Naive thymus-derived CD4-positive, alpha-beta T cell (primary cell): ENCODE measurements at regions of chr2 and their contacts with region 1.

Region 1: GRCh38 chr2:208254871-208255556 is at the start of gene IDH1:
- DNase-seq: peak; percentile 79 to 97 (median 88)
- ATAC-seq: peak; percentile 95
- H3K4me3 ChIP-seq: peak within 1 kb of the TSS; percentile 70
- H3K4me3 Mint-ChIP-seq: peak within 1 kb of the TSS; percentile 93 to 100 (median 97)
- H3K27ac ChIP-seq: peak within 1 kb of the TSS; percentile 62
- H3K27ac Mint-ChIP-seq: peak within 1 kb of the TSS; percentile 47 to 91 (median 79)
- H3K4me1 ChIP-seq: peaks cover 0 to 9% of the 10 kb centered on the region in 2 donors
- H3K4me1 Mint-ChIP-seq: peaks cover 8 to 28% (median 23%) of the 10 kb centered on the region in 7 donors
- H3K27me3 ChIP-seq: no peaks in the 10 kb centered on the region
- H3K27me3 Mint-ChIP-seq: peaks cover 0 to 3% (median 0%) of the 10 kb centered on the region in 5 donors
- total RNA-seq, gene IDH1: 5.0 to 26.4 (median 20.4) TPM

Region 2: DNA sequence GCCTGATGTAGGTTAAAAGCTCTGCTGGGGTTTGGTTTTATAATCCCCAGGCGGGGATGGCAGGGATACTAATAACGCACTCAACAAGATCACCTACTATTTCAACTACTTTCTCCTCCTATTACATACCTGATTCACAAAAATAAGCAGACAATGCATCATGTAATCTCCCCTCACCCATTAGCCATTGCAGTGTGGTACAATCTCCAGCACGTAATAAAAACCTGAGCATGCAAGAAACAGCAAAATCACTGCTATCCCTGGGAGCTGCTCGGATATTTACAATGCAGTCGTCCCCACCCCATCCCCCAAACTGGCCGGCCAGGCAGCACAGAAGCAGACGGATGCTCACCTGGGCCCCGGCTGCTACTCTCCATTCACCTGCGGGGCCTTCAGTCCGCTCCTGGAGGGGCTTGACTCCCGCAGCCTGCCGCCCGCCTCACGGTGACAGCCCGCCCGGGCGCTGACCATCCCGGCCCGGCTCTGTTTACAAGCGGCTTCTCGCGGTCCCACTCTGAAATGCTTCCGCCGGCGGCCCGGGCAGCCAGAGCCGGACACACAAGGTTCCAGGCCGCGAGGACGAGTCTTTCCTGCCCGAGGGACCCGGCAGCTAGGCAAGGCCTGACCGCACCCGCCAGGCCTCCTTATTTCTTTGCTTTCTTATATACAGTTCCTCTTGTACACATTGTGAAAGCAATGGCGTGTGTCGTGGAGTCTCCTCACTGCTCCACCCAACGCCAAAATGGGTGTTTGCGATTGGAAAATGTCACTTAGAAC is 229.8 kb before region 1 on chr2 and contains the start of gene PLEKHM3:
- CTCF ChIA-PET with region 1: no interaction called
- POLR2A ChIA-PET with region 1: no interaction called
- intact Hi-C with region 1: loop called in 1 of 2 experiments (anchors 2 kb)
- DNase-seq: peak; percentile 12 to 80 (median 62)
- ATAC-seq: peak; percentile 93
- H3K4me3 ChIP-seq: peak within 1 kb of the TSS; percentile 88
- H3K4me3 Mint-ChIP-seq: peak within 1 kb of the TSS; percentile 85 to 100 (median 96)
- H3K27ac ChIP-seq: peak within 1 kb of the TSS; percentile 76
- H3K27ac Mint-ChIP-seq: peak within 1 kb of the TSS; percentile 89 to 98 (median 94)
- H3K4me1 ChIP-seq: peaks cover 0 to 4% of the 10 kb centered on the region in 2 donors
- H3K4me1 Mint-ChIP-seq: peaks cover 12 to 34% (median 27%) of the 10 kb centered on the region in 7 donors
- H3K27me3 ChIP-seq: no peaks in the 10 kb centered on the region
- H3K27me3 Mint-ChIP-seq: no peaks in the 10 kb centered on the region
- total RNA-seq, gene PLEKHM3: 6.1 to 19.4 (median 15.5) TPM

Region 3: DNA sequence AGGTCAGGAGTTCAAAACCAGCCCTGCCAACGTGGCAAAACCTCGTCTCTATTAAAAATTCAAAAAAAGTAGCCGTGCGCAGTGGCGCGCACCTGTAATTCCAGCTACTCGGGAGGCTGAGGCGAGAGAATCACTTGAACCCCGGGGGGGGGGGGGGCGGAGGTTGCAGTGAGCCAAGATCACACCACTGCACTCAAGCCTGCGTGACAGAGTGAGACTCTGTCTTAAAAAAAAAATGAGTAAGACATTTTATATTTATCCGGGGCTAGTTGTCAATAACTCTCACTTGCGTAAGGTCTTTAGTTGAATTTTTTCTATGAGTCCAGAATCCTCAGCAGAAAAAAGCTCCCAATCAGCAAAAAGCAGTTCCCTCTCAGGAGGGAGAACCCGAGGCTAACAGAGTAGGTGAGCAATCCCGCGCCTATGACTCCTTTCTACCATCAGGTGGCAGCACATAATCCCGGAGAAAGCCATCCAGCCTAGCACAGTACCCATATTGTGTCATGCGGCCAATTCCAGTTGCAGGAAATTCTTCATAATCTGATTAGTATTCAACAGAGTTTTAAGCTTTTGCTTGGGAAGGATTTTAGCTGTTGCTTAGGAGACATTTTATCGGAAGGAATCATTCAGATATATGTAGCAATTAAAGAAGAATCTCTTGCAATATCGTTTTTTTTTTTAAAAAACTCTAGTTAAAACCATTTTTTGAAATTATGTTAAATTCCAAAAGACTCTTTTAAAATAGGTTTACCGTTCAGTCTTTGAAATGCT is 79.8 kb before region 1 on chr2:
- CTCF ChIA-PET with region 1: interaction called, 6 read pairs
- POLR2A ChIA-PET with region 1: no interaction called
- intact Hi-C with region 1: loop called (anchors 1 kb)
- DNase-seq: peak; percentile 7 to 59 (median 45)
- ATAC-seq: peak; percentile 93
- H3K4me3 ChIP-seq: no peak overlapping the region
- H3K4me3 Mint-ChIP-seq: no peak overlapping the region
- H3K27ac ChIP-seq: no peak overlapping the region
- H3K27ac Mint-ChIP-seq: no peak overlapping the region
- H3K4me1 ChIP-seq: no peaks in the 10 kb centered on the region
- H3K4me1 Mint-ChIP-seq: peaks cover 0 to 6% (median 4%) of the 10 kb centered on the region in 7 donors
- H3K27me3 ChIP-seq: no peaks in the 10 kb centered on the region
- H3K27me3 Mint-ChIP-seq: peaks cover 2 to 20% (median 11%) of the 10 kb centered on the region in 5 donors

Region 4: DNA sequence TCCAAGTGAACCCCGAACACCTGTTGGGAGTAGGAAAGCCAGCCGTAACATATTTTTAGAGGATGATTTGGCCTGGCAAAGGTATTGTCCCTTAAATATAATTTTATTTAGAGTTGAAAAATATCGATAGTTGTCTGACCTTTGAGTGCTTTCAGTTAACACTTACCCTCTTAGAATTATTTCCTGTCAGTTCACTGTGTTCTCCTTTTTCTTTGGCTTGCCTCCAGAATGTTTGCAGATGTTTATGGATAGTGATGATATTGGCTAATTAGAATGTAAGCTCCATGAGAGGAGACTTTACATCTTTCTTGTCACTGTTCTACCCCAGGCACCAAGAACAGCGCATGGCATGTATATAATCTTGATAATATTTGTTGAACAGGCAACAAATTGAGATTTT is 30.8 kb after region 1 on chr2:
- CTCF ChIA-PET with region 1: no interaction called
- POLR2A ChIA-PET with region 1: no interaction called
- intact Hi-C with region 1: no loop called
- DNase-seq: no peak
- ATAC-seq: no peak
- H3K4me3 ChIP-seq: no peak overlapping the region
- H3K4me3 Mint-ChIP-seq: no peak overlapping the region
- H3K27ac ChIP-seq: no peak overlapping the region
- H3K27ac Mint-ChIP-seq: no peak overlapping the region
- H3K4me1 ChIP-seq: no peaks in the 10 kb centered on the region
- H3K4me1 Mint-ChIP-seq: peaks cover 6 to 15% (median 11%) of the 10 kb centered on the region in 7 donors
- H3K27me3 ChIP-seq: no peaks in the 10 kb centered on the region
- H3K27me3 Mint-ChIP-seq: no peaks in the 10 kb centered on the region

Region 5: GRCh38 chr2:208373460-208374089 is 118.6 kb after region 1 on chr2:
- CTCF ChIA-PET with region 1: no interaction called
- POLR2A ChIA-PET with region 1: no interaction called
- intact Hi-C with region 1: no loop called
- DNase-seq: peak in 3 of 9 donors; percentile 15 to 22 (median 19)
- ATAC-seq: peak; percentile 66
- H3K4me3 ChIP-seq: no peak overlapping the region
- H3K4me3 Mint-ChIP-seq: no peak overlapping the region
- H3K27ac ChIP-seq: no peak overlapping the region
- H3K27ac Mint-ChIP-seq: no peak overlapping the region
- H3K4me1 ChIP-seq: no peaks in the 10 kb centered on the region
- H3K4me1 Mint-ChIP-seq: no peaks in the 10 kb centered on the region
- H3K27me3 ChIP-seq: peaks cover 0 to 2% of the 10 kb centered on the region in 2 donors
- H3K27me3 Mint-ChIP-seq: peaks cover under 1 to 15% (median 4%) of the 10 kb centered on the region in 5 donors

Region 6: GRCh38 chr2:210171309-210172203 is 1916.5 kb after region 1 on chr2 and contains the start of gene KANSL1L:
- CTCF ChIA-PET with region 1: no interaction called
- POLR2A ChIA-PET with region 1: no interaction called
- intact Hi-C with region 1: loop called (anchors 2 to 5 kb)
- DNase-seq: peak; percentile 92 to 99 (median 94)
- ATAC-seq: peak; percentile 95
- H3K4me3 ChIP-seq: peak within 1 kb of the TSS; percentile 89
- H3K4me3 Mint-ChIP-seq: peak within 1 kb of the TSS; percentile 90 to 100 (median 98)
- H3K27ac ChIP-seq: peak within 1 kb of the TSS; percentile 93
- H3K27ac Mint-ChIP-seq: peak within 1 kb of the TSS; percentile 93 to 99 (median 96)
- H3K4me1 ChIP-seq: peaks cover 6 to 7% of the 10 kb centered on the region in 2 donors
- H3K4me1 Mint-ChIP-seq: peaks cover 17 to 42% (median 33%) of the 10 kb centered on the region in 7 donors
- H3K27me3 ChIP-seq: no peaks in the 10 kb centered on the region
- H3K27me3 Mint-ChIP-seq: peaks cover 0 to 41% (median 0%) of the 10 kb centered on the region in 5 donors
- total RNA-seq, gene KANSL1L: 6.3 to 23.3 (median 13.3) TPM